AG04449 (cell line): ENCODE measurements at regions of chr5 and their contacts with region 1.

Region 1: DNA sequence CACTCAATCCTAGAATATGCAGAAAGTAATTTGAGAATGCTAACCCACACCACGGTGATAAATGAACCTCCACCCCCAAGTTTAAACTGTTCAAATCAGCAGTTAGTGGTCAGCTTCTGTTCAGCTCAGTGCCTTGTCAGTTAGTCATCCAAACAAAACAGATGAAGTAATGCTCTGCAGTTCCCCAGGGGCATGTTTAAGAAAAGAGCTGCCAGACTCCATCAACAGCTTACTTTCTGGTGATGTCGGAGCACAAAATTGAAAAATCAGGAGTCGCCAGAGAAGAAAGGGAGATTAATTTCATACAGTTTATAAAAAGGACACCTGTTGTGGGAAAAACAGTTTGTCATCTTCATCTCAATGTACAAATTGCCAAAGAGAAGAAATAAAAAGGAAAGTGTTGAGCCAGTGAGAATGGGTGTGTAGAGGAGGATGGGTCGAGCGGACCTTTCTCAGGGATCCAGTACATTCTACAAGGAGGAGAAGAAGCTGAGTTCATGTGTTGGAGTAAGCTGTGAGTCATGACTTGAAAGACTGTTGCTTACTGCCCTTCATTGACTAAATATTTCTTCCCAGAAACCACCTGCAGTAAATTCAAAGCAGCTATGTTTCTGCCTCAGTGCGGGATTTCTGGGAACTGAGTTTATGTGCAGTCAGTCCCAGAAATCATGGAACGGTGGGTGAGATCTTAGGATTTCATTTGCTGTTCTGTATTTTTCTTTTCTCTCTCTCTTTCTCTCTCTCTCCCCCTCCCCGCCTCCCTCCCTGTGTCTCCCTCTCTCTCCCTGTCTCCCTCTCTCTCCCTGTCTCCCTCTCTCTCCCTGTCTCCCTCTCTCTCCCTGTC is 13.7 kb downstream of the TRIO start:
- DNase-seq: peak; percentile 96
- H3K4me3 ChIP-seq: peak overlapping the region; percentile 44
- CTCF ChIP-seq: no peak

Region 2: GRCh38 chr5:14131855-14132503 is 24.9 kb before region 1 on chr5:
- CTCF ChIA-PET with region 1: no interaction called
- POLR2A ChIA-PET with region 1: no interaction called
- DNase-seq: no peak
- H3K4me3 ChIP-seq: no peak overlapping the region
- CTCF ChIP-seq: no peak

Region 3: DNA sequence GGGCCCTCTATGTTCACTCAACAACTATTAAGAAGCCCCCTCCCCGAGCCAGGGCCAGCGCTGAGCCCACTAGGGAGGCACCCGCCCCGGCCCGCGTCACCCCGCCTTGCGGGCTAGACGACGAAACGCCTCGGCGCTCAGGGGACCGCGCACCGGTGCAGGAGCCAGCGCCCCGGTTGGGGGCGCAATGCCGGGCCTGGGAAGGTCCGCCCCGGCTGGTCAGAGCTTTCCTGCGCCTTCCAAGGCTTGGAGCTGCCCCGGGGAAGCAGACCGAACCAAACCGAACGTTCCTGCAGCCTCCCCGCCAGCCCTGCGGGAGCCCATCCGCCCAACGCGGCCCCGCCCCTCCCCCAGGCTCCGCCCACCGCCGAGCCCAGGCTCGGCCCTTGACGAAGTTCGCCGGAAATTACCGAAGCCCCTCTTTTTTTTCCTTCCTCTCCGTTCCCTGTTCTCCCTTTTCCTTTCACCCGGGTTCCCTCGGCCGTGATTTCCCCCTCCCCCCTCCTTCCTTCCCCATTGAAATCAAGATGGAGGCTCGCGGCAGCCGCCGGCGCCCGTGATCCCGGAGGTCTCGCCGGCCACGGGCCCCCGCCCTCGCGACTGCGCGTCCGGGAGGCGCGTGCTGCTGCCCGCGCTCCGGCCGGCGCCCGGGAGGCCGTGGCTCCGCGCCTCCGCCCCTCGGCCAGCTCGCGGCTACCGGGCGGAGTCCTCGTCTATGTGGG is 13.9 kb before region 1 on chr5 and contains the start of gene TRIO:
- CTCF ChIA-PET with region 1: interaction called, 10 read pairs
- POLR2A ChIA-PET with region 1: interaction called, 11 read pairs
- DNase-seq: no peak
- H3K4me3 ChIP-seq: peak within 1 kb of the TSS; percentile 95
- CTCF ChIP-seq: peak; percentile 53